ENCODE measurements at regions of chr12 and their contacts with region 1.

Region 1: DNA sequence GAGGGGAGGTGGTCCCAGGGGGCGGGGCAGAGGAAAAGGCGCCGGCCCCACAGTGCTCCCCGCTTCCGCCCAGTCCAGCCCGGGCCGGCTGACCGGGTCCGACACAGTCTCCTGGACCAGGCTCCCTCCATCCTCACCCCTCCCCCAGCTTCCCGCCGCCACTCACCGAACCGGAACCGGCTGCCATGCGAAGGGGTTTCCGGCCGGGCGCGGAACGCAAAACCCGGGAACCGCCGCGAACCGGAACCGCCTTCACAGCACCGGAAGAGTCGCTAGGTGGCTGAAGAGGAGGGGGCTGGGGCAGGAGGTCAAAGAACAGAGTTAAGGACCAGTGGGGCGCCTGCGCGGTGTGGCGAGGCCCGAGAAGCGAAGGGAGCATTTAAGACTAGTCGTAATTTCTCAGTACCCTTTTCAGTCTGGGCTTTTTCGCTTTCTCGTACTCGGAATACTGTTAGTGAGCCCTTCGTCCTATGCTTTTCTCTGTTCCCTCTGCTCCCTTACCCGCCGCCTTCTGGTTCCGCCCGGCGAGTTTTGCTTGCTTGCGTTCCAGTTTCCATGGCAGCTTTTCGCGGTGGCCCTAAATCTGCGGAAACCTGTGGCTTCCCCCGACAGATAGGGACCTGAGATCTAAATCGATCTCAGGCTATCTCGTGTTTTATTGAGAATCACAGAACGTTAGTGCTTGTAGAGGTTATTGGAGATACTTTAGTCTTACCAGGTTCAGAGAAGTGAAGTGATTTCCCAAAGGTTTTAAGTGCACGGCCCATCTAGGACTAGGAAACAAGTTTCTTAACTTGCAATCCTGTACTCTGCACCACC is at the start of gene SENP1:
- DNase-seq: peak; percentile 87 to 94
- ATAC-seq: peak; percentile 81 to 88 (median 86)
- H3K4me3 ChIP-seq: peak within 1 kb of the TSS; percentile 87
- H3K4me3 Mint-ChIP-seq: peak within 1 kb of the TSS; percentile 89
- H3K27ac ChIP-seq: peak within 1 kb of the TSS; percentile 98
- H3K27ac Mint-ChIP-seq: peak within 1 kb of the TSS; percentile 94 to 99
- H3K4me1 ChIP-seq: peaks cover 13% of the 10 kb centered on the region
- H3K4me1 Mint-ChIP-seq: peaks cover 20 to 44% of the 10 kb centered on the region in 2 donors
- H3K27me3 ChIP-seq: no peaks in the 10 kb centered on the region
- H3K27me3 Mint-ChIP-seq: peaks cover 7 to 9% of the 10 kb centered on the region in 2 donors
- CTCF ChIP-seq: peak; percentile 19
- total RNA-seq, gene SENP1: 35.6 to 39.6 (median 36.8) TPM

Region 2: GRCh38 chr12:47812797-47813510 is 293.1 kb before region 1 on chr12:
- intact Hi-C with region 1: loop called (anchors 5 kb)
- DNase-seq: peak; percentile 82 to 94
- ATAC-seq: peak; percentile 60 to 81 (median 72)
- H3K4me3 ChIP-seq: peak overlapping the region; percentile 42
- H3K4me3 Mint-ChIP-seq: peak overlapping the region; percentile 88
- H3K27ac ChIP-seq: peak overlapping the region; percentile 87
- H3K27ac Mint-ChIP-seq: peak overlapping the region; percentile 91 to 92
- H3K4me1 ChIP-seq: peaks cover 98% of the 10 kb centered on the region
- H3K4me1 Mint-ChIP-seq: peaks cover 85 to 94% of the 10 kb centered on the region in 2 donors
- H3K27me3 ChIP-seq: no peaks in the 10 kb centered on the region
- H3K27me3 Mint-ChIP-seq: no peaks in the 10 kb centered on the region
- CTCF ChIP-seq: no peak

Region 3: DNA sequence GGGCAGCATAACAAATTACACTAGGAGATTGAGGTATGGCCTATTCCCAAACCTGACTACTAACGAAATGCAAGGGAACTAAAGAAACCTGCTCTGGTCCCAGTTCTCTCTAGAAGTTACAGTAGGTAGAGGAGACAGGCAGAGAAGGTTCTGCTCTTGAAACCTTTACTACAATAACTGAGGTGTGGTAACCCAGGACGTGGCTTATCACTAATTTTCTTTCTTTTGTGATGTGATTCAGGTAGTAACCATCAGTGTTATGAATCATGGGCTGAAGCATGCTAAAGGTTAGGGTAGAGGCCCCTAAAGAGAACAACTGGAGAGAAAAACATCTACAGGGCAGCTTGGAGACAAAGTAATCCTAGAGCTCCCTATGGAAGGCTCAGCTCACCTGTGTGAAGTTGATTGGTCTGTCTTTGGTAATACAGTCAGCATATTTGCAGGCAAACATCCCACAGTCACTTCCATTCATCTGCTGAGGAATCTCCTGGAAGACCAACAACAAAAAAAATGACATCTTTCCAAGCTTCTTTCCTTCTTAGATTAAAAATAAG is 60.0 kb before region 1 on chr12:
- intact Hi-C with region 1: no loop called
- DNase-seq: no peak
- ATAC-seq: no peak
- H3K4me3 ChIP-seq: no peak overlapping the region
- H3K4me3 Mint-ChIP-seq: no peak overlapping the region
- H3K27ac ChIP-seq: no peak overlapping the region
- H3K27ac Mint-ChIP-seq: no peak overlapping the region
- H3K4me1 ChIP-seq: no peaks in the 10 kb centered on the region
- H3K4me1 Mint-ChIP-seq: no peaks in the 10 kb centered on the region
- H3K27me3 ChIP-seq: no peaks in the 10 kb centered on the region
- H3K27me3 Mint-ChIP-seq: no peaks in the 10 kb centered on the region
- CTCF ChIP-seq: no peak

Region 4: DNA sequence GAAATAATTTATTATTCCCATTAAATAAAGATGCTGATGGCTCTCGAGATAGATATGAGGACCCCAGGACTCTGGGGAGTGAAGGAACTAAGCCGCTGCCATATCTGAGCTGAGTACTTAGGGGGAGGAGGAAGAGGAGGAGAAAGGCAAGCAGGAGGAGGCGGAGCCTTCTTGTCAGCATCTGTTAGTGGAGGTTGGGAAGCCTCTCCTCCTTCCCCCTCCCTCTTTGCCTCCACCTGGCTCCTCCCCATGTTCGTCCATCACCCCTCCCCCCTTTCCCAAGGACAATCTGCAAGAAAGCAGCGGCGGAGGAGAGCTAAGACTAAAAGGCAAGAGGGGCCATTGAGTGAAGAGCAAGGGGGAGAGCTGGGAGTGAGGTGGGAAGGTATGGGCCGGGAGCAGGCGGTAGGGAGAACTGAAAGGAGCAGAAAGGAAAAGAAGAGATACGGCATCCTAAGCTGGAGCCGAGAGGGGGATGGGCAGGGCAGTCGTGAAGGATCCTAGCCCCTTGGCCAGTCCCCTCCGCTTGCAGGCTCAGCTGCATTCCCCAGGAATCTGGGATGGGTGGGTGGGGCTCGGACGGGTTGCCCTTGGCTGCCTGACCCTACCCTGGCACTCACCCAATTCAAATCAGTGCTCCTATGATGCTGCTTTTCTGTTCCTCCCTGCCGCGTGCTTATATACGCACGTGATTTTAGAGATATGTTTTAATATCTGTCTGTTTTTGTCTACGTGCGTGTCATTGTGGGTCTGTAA is 13.2 kb after region 1 on chr12 and contains the start of gene PFKM:
- intact Hi-C with region 1: no loop called
- DNase-seq: peak in 1 of 2 donors; percentile 81
- ATAC-seq: peak; percentile 81 to 98 (median 95)
- H3K4me3 ChIP-seq: peak within 1 kb of the TSS; percentile 47
- H3K4me3 Mint-ChIP-seq: peak within 1 kb of the TSS; percentile 91
- H3K27ac ChIP-seq: no peak within 1 kb of the TSS
- H3K27ac Mint-ChIP-seq: peak within 1 kb of the TSS in 1 of 2 donors; percentile 7
- H3K4me1 ChIP-seq: peaks cover 10% of the 10 kb centered on the region
- H3K4me1 Mint-ChIP-seq: peaks cover 12 to 14% of the 10 kb centered on the region in 2 donors
- H3K27me3 ChIP-seq: peaks cover 2% of the 10 kb centered on the region
- H3K27me3 Mint-ChIP-seq: peaks cover 15 to 19% of the 10 kb centered on the region in 2 donors
- CTCF ChIP-seq: no peak
- total RNA-seq, gene PFKM: 6.2 to 13.5 (median 6.4) TPM

Region 5: DNA sequence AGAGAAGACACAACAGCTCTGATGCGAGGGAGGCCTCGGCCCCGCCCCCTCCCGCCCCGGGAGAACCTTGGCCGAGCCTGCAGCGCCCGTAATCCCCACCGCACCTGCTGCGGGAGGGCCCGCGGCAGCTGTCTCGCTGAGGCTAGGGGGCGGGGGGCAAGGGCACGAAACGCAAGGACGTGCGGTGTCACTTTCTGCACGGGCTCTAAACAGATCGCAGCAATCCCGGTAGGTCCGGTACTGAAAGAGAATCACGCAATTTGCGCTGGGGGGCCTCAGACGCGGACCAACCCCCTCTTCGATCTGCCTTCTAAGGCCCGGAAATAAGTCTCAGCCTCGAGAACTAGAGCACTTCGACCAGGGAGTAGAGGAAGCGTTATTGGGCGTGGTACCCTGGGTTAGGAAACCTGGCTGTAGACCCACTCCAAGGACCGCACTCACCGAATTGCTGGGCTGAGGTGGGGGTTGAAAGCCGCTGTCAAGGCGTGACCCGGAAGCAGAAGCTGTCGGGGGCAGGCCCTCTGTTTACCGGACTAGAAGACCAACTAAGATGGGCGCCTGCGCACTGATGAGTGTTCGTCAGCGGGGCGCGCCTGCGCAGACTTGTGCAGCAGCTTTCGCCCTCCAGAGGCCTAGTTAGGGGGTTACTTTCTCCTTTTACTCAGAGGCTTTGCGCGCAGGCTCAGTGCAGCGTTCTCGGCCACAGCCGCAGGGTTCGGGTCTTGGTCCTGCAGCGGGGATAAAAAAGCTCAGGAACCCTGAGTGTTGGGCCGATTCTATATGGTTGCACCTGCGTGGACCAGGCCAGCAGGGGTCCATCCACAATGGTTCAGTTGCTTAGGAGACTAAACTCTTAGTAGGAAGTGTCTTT is 51.2 kb after region 1 on chr12 and contains the start of gene ASB8:
- intact Hi-C with region 1: loop called (anchors 1 kb)
- DNase-seq: peak; percentile 99 to 100
- ATAC-seq: peak; percentile 92 to 99 (median 93)
- H3K4me3 ChIP-seq: peak within 1 kb of the TSS; percentile 94
- H3K4me3 Mint-ChIP-seq: peak within 1 kb of the TSS; percentile 96
- H3K27ac ChIP-seq: peak within 1 kb of the TSS; percentile 75
- H3K27ac Mint-ChIP-seq: peak within 1 kb of the TSS; percentile 95 to 98
- H3K4me1 ChIP-seq: peaks cover 15% of the 10 kb centered on the region
- H3K4me1 Mint-ChIP-seq: peaks cover 31 to 36% of the 10 kb centered on the region in 2 donors
- H3K27me3 ChIP-seq: no peaks in the 10 kb centered on the region
- H3K27me3 Mint-ChIP-seq: no peaks in the 10 kb centered on the region
- CTCF ChIP-seq: peak; percentile 62
- total RNA-seq, gene ASB8: 62.9 to 73.8 (median 71.3) TPM

Region 6: DNA sequence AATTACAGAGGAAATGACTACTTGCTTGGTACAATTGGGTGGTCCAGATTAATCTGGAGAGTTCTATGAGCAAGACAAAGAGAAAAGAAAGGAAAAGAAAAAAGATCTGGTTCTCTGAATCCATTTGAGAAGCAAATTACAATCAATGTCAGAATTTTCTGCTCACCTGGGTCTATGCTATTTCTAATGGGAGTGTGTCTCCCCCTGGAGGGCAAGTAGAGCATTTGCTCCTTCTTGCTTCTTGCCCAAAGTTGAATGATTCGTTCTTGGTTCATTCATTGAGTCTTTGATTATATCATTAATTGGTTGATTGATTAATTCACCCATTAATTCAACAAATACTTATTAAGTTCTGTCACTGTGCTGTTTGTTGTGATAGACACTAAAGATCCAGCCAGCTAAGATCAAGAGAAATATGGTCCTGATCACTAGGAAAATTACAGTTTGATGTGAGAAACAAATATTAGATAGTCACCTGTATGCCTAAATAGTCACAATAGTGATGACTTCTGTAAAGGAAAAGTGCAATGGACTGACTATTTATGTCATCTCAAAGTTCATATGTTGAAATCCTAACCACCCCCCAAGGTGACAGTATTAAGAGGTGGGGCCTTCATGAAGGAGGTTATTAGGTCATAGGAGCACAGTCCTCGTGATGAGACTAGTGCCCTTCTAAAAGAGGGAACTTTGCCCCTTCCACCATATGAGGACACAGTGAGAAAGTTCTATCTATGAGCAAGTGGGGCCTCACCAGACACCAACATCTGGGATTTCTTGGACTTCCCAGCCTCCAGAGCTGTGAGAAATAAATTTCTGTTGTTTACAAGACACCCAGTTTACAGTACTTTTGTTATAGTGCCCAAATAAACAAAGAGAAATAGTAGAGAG is 59.3 kb after region 1 on chr12:
- intact Hi-C with region 1: loop called (anchors 2 kb)
- DNase-seq: peak in 1 of 2 donors; percentile 89
- ATAC-seq: peak; percentile 76 to 93 (median 81)
- H3K4me3 ChIP-seq: no peak overlapping the region
- H3K4me3 Mint-ChIP-seq: no peak overlapping the region
- H3K27ac ChIP-seq: no peak overlapping the region
- H3K27ac Mint-ChIP-seq: no peak overlapping the region
- H3K4me1 ChIP-seq: no peaks in the 10 kb centered on the region
- H3K4me1 Mint-ChIP-seq: no peaks in the 10 kb centered on the region
- H3K27me3 ChIP-seq: no peaks in the 10 kb centered on the region
- H3K27me3 Mint-ChIP-seq: peaks cover 17% of the 10 kb centered on the region in 2 donors
- CTCF ChIP-seq: peak; percentile 97

Region 7: DNA sequence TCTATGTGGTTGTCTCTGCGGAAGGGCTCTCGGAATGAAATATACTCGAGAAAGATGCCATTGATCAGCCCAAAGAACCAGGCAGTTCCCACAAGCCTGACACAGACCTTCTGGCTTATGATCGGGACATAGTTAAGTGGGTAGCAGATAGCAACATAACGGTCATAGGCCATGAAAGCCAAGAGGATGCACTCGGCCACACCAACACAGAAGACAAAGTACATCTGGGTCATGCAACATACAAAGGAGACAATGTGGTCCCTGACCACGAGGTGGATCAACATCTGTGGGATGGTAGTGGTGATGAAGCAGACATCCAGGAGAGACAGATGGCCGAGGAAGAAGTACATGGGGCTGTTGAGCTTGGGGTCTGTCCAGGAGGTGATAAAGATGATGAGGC is 96.7 kb after region 1 on chr12:
- intact Hi-C with region 1: no loop called
- DNase-seq: no peak
- ATAC-seq: no peak
- H3K4me3 ChIP-seq: no peak overlapping the region
- H3K4me3 Mint-ChIP-seq: no peak overlapping the region
- H3K27ac ChIP-seq: no peak overlapping the region
- H3K27ac Mint-ChIP-seq: no peak overlapping the region
- H3K4me1 ChIP-seq: peaks cover 27% of the 10 kb centered on the region
- H3K4me1 Mint-ChIP-seq: peaks cover 41 to 50% of the 10 kb centered on the region in 2 donors
- H3K27me3 ChIP-seq: no peaks in the 10 kb centered on the region
- H3K27me3 Mint-ChIP-seq: no peaks in the 10 kb centered on the region
- CTCF ChIP-seq: no peak

Measured in natural killer cell (primary cell).